ENCODE measurements at regions of chr20 and their contacts with region 1.

Region 1: DNA sequence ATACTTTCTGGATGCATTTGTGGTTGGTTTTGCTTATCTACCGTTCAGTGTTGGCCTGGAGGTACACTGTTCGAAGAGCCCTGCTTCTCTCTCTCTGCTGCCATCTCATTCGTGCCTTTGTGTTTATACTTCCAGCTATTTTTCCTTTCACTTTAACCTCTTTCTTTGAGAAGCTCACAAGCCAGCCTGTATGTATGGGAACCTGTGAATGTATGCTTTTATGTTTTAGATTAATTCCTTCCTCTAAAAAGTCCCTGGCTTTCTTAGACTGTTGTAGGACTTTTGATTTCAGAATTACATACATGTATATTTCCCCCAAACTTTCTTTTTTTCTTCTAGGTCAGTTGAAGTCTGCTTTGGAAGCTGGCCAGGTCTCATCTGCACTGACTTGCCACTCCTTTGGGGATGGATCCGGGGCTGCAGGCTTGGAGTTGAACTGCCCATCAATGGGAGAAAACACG is 83.0 kb downstream of the SCAND1 start:
- DNase-seq: peak; percentile 76
- H3K4me3 Mint-ChIP-seq: peak overlapping the region; percentile 67
- H3K27ac Mint-ChIP-seq: peak overlapping the region; percentile 95
- H3K4me1 Mint-ChIP-seq: peaks cover 40% of the 10 kb centered on the region
- H3K27me3 Mint-ChIP-seq: no peaks in the 10 kb centered on the region
- CTCF ChIP-seq: no peak

Region 2: GRCh38 chr20:35771689-35772562 is 99.4 kb before region 1 on chr20 and contains the start of gene PHF20:
- CTCF ChIA-PET with region 1: interaction called, 3 read pairs
- POLR2A ChIA-PET with region 1: interaction called, 68 read pairs
- intact Hi-C with region 1: no loop called
- DNase-seq: peak; percentile 92
- H3K4me3 Mint-ChIP-seq: peak within 1 kb of the TSS; percentile 91
- H3K27ac Mint-ChIP-seq: peak within 1 kb of the TSS; percentile 97
- H3K4me1 Mint-ChIP-seq: peaks cover 51% of the 10 kb centered on the region
- H3K27me3 Mint-ChIP-seq: no peaks in the 10 kb centered on the region
- CTCF ChIP-seq: no peak
- total RNA-seq, gene PHF20: 64.2 and 74.7 TPM in 2 replicates

Region 3: GRCh38 chr20:35820715-35821114 is 50.6 kb before region 1 on chr20:
- CTCF ChIA-PET with region 1: no interaction called
- POLR2A ChIA-PET with region 1: interaction called, 10 read pairs
- intact Hi-C with region 1: no loop called
- DNase-seq: peak; percentile 37
- H3K4me3 Mint-ChIP-seq: no peak overlapping the region
- H3K27ac Mint-ChIP-seq: peak overlapping the region; percentile 0
- H3K4me1 Mint-ChIP-seq: peaks cover 30% of the 10 kb centered on the region
- H3K27me3 Mint-ChIP-seq: no peaks in the 10 kb centered on the region
- CTCF ChIP-seq: no peak

Region 4: DNA sequence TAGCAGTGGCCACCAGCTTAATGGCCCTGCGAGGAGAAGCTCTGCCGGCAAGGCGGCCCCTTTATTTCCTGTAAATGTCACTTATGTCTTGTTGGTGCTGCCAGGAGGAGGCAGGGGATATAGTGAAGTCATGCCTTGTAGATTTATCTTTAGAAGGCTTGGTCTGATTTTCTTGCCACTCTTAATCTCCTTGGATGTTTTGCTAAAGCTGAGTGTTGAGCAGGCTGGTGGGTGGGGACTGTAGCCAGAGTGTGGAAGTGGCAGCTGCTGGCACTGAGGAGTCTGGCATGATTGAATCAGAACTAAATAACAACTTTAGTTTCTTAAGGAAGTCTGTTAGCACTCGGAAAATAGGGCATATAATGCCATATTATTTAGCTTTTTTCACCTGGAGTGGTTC is 21.6 kb before region 1 on chr20:
- CTCF ChIA-PET with region 1: interaction called, 7 read pairs
- POLR2A ChIA-PET with region 1: interaction called, 16 read pairs
- intact Hi-C with region 1: no loop called
- DNase-seq: no peak
- H3K4me3 Mint-ChIP-seq: no peak overlapping the region
- H3K27ac Mint-ChIP-seq: no peak overlapping the region
- H3K4me1 Mint-ChIP-seq: peaks cover 6% of the 10 kb centered on the region
- H3K27me3 Mint-ChIP-seq: no peaks in the 10 kb centered on the region
- CTCF ChIP-seq: no peak

Region 5: DNA sequence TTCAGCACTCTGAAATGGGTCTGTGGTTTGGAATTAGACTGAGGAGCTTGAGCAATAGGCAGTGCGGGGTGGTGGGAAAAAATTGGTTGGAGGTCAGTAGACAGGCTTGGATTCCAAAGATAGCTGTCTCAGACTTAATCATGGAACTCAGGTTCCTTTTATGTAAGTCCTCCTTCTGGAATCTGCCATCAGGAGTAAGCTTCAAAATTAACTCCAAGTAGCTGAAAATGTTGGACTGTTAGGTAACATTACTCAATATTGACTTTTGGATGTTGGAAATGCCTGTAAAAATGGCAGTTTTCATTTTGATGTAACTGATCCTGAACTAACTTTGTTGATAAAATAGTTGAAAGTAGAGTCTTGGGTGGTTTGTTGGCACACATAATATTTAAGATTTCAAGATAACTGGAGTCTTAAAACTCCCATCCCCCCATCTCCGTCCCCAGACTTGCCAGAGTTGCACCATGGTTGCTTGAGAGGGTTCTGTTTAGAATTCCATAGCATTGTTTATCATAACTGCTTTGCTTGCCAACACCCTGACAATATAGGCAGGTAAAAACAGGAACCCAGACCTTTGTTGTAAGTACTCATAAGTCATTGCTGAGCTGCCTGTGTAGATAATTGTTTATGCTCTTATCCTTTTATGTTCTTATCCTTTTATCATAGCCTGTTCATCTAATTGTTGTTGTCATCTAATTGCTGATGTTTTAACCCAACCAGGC is 16.5 kb before region 1 on chr20:
- CTCF ChIA-PET with region 1: interaction called, 5 read pairs
- POLR2A ChIA-PET with region 1: interaction called, 16 read pairs
- intact Hi-C with region 1: no loop called
- DNase-seq: peak; percentile 47
- H3K4me3 Mint-ChIP-seq: no peak overlapping the region
- H3K27ac Mint-ChIP-seq: peak overlapping the region; percentile 27
- H3K4me1 Mint-ChIP-seq: peaks cover 23% of the 10 kb centered on the region
- H3K27me3 Mint-ChIP-seq: no peaks in the 10 kb centered on the region
- CTCF ChIP-seq: no peak

Region 6: DNA sequence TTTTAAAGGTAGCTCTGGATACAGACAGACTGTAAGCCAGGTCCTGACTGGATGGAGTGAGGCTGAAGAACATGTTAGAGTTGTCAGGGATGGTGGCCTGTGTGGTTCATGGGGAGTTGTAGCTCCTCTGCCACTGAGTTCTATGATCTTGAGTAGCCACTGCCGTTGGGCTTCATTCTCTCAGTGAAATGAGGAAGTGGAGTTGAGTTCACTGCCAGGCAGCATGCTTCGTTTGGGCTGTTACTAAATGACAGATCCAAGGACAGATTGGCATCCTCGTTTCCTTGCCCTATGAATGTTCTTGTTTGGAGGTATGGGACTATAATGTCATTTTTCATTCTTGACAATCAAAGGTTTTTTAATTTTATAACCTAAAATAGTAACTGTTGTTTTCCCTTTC is 45.7 kb after region 1 on chr20:
- CTCF ChIA-PET with region 1: no interaction called
- POLR2A ChIA-PET with region 1: no interaction called
- intact Hi-C with region 1: no loop called
- DNase-seq: no peak
- H3K4me3 Mint-ChIP-seq: no peak overlapping the region
- H3K27ac Mint-ChIP-seq: peak overlapping the region; percentile 19
- H3K4me1 Mint-ChIP-seq: no peaks in the 10 kb centered on the region
- H3K27me3 Mint-ChIP-seq: no peaks in the 10 kb centered on the region
- CTCF ChIP-seq: no peak

Region 7: DNA sequence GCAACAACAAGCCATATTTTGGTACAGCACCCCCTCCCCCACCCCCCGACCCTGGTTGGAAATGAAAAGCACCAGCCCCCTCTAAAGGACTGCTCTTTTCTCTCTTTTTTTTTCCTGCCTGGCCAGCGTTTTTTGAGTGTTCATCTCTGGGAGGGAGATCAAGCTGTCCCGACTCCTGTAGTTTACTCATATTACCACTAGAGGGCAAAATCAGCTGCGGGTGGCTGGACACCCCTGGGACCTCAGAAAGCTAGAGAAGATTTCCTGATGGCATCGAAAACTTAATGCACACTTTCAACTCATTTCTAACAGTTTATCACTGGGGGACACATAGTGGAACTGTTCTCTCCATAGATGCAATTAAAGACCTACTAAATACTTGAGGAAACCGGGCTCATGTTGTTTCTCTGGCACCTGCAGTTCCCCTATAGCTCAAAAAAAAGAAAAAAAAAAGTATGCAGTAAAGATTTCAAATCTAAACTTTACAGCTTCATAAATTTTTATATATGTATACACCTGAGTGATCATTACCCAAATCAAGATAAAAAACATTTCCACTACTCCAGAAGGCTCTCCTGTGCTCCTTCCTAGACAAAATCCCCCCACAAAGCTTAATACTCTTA is 121.5 kb after region 1 on chr20:
- CTCF ChIA-PET with region 1: no interaction called
- POLR2A ChIA-PET with region 1: no interaction called
- intact Hi-C with region 1: no loop called
- DNase-seq: peak; percentile 71
- H3K4me3 Mint-ChIP-seq: no peak overlapping the region
- H3K27ac Mint-ChIP-seq: no peak overlapping the region
- H3K4me1 Mint-ChIP-seq: peaks cover 7% of the 10 kb centered on the region
- H3K27me3 Mint-ChIP-seq: peaks cover 14% of the 10 kb centered on the region
- CTCF ChIP-seq: peak; percentile 78